ENCODE measurements at regions of chr14 and their contacts with region 1.

Region 1: GRCh38 chr14:61456720-61457119 is 135.3 kb downstream of the PRKCH start:
- DNase-seq: peak; percentile 73
- ATAC-seq: peak; percentile 91
- H3K4me3 ChIP-seq: no peak overlapping the region
- H3K27ac ChIP-seq: no peak overlapping the region
- H3K4me1 ChIP-seq: no peaks in the 10 kb centered on the region
- H3K27me3 ChIP-seq: peaks cover 19% of the 10 kb centered on the region
- CTCF ChIP-seq: peak; percentile 87
- POLR2A ChIP-seq: peak; percentile 35; the same call in 1 of the 2 replicates
- RAD21 ChIP-seq: peak; percentile 91

Region 2: DNA sequence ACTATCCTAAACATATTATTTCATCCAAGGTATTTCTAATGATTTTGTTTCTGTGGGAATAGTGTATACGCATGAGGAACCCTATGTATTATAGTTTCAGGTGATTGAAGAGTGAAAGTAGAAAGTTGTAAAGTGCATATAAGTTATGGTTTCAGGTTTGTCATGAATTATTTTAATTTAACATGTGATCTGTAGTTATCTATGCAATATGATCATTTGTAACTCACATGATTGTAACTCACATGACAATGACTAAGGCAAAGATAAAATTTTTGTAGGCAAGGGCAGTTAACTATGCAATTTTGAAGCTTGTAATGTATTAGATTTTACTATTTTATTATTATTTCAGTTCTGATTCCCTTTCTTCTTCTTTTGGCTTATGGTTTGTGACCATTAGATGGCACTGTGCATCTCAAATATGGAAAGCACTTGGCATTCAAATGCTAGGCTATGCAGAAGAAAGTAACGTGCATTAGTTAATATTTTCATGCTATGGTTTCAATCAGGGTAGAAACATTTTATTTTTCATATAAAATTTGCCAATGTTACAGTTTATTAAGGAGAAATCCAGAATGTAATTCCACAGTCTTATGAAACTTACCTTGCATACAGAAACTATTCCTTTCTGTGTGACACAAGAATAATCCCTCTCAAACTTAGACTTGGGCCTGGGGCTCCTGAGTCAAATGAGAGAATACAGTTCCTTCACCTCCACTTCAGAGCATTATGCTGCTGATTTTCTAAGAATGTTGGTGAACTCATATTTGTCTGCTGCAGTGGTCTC is 159.8 kb before region 1 on chr14:
- CTCF ChIA-PET with region 1: no interaction called
- POLR2A ChIA-PET with region 1: no interaction called
- dilution Hi-C with region 1: no loop called
- in situ Hi-C with region 1: no loop called
- intact Hi-C with region 1: loop called (anchors 2 kb)
- DNase-seq: peak; percentile 56
- ATAC-seq: peak; percentile 87
- H3K4me3 ChIP-seq: no peak overlapping the region
- H3K27ac ChIP-seq: no peak overlapping the region
- H3K4me1 ChIP-seq: no peaks in the 10 kb centered on the region
- H3K27me3 ChIP-seq: peaks cover 17% of the 10 kb centered on the region
- CTCF ChIP-seq: peak; percentile 72
- POLR2A ChIP-seq: no peak
- RAD21 ChIP-seq: peak; percentile 54

Region 3: GRCh38 chr14:61315313-61315712 is 141.4 kb before region 1 on chr14:
- CTCF ChIA-PET with region 1: no interaction called
- POLR2A ChIA-PET with region 1: no interaction called
- dilution Hi-C with region 1: no loop called
- in situ Hi-C with region 1: no loop called
- intact Hi-C with region 1: no loop called
- DNase-seq: no peak
- ATAC-seq: no peak
- H3K4me3 ChIP-seq: no peak overlapping the region
- H3K27ac ChIP-seq: no peak overlapping the region
- H3K4me1 ChIP-seq: no peaks in the 10 kb centered on the region
- H3K27me3 ChIP-seq: peaks cover 32% of the 10 kb centered on the region
- CTCF ChIP-seq: no peak
- POLR2A ChIP-seq: no peak
- RAD21 ChIP-seq: no peak

Region 4: GRCh38 chr14:61710853-61711817 is 254.4 kb after region 1 on chr14:
- CTCF ChIA-PET with region 1: no interaction called
- POLR2A ChIA-PET with region 1: no interaction called
- dilution Hi-C with region 1: loop called (anchors 25 kb)
- in situ Hi-C with region 1: no loop called
- intact Hi-C with region 1: no loop called
- DNase-seq: no peak
- ATAC-seq: peak; percentile 28; the same call in 1 of the 2 replicates
- H3K4me3 ChIP-seq: no peak overlapping the region
- H3K27ac ChIP-seq: no peak overlapping the region
- H3K4me1 ChIP-seq: peaks cover 14% of the 10 kb centered on the region
- H3K27me3 ChIP-seq: no peaks in the 10 kb centered on the region
- CTCF ChIP-seq: no peak
- POLR2A ChIP-seq: no peak
- RAD21 ChIP-seq: no peak

Region 5: GRCh38 chr14:62002642-62003041 is 545.9 kb after region 1 on chr14:
- CTCF ChIA-PET with region 1: no interaction called
- POLR2A ChIA-PET with region 1: no interaction called
- dilution Hi-C with region 1: no loop called
- in situ Hi-C with region 1: no loop called
- intact Hi-C with region 1: no loop called
- DNase-seq: peak; percentile 55
- ATAC-seq: no peak
- H3K4me3 ChIP-seq: no peak overlapping the region
- H3K27ac ChIP-seq: no peak overlapping the region
- H3K4me1 ChIP-seq: peaks cover 4% of the 10 kb centered on the region; the same call in 1 of the 2 replicates
- H3K27me3 ChIP-seq: no peaks in the 10 kb centered on the region
- CTCF ChIP-seq: no peak
- POLR2A ChIP-seq: no peak
- RAD21 ChIP-seq: no peak